HepG2 (cell line): ENCODE measurements at regions of chr13 and their contacts with region 1.

Region 1: GRCh38 chr13:86725105-86725504 is 925.9 kb upstream of the SLITRK6 start:
- DNase-seq: no peak
- ATAC-seq: peak; percentile 44; the same call in 1 of the 3 replicates
- H3K4me3 ChIP-seq: no peak overlapping the region
- H3K27ac ChIP-seq: no peak overlapping the region
- H3K4me1 ChIP-seq: no peaks in the 10 kb centered on the region
- H3K27me3 ChIP-seq: no peaks in the 10 kb centered on the region
- CTCF ChIP-seq: no peak
- EP300 ChIP-seq: no peak
- POLR2A ChIP-seq: no peak
- RAD21 ChIP-seq: no peak

Region 2: GRCh38 chr13:86567119-86567518 is 158.0 kb before region 1 on chr13:
- CTCF ChIA-PET with region 1: no interaction called
- POLR2A ChIA-PET with region 1: no interaction called
- in situ Hi-C with region 1: no loop called
- intact Hi-C with region 1: loop called (anchors 1 kb)
- DNase-seq: peak; percentile 24
- ATAC-seq: peak; percentile 91
- H3K4me3 ChIP-seq: no peak overlapping the region
- H3K27ac ChIP-seq: no peak overlapping the region
- H3K4me1 ChIP-seq: no peaks in the 10 kb centered on the region
- H3K27me3 ChIP-seq: no peaks in the 10 kb centered on the region
- CTCF ChIP-seq: peak; percentile 49
- EP300 ChIP-seq: no peak
- POLR2A ChIP-seq: no peak
- RAD21 ChIP-seq: no peak

Region 3: GRCh38 chr13:86830046-86830445 is 104.9 kb after region 1 on chr13:
- CTCF ChIA-PET with region 1: no interaction called
- POLR2A ChIA-PET with region 1: no interaction called
- in situ Hi-C with region 1: no loop called
- intact Hi-C with region 1: no loop called
- DNase-seq: no peak
- ATAC-seq: no peak
- H3K4me3 ChIP-seq: no peak overlapping the region
- H3K27ac ChIP-seq: no peak overlapping the region
- H3K4me1 ChIP-seq: no peaks in the 10 kb centered on the region
- H3K27me3 ChIP-seq: no peaks in the 10 kb centered on the region
- CTCF ChIP-seq: no peak
- EP300 ChIP-seq: no peak
- POLR2A ChIP-seq: no peak
- RAD21 ChIP-seq: no peak